Panc1 (cell line): ENCODE measurements at regions of chr2 and their contacts with region 1.

Region 1: DNA sequence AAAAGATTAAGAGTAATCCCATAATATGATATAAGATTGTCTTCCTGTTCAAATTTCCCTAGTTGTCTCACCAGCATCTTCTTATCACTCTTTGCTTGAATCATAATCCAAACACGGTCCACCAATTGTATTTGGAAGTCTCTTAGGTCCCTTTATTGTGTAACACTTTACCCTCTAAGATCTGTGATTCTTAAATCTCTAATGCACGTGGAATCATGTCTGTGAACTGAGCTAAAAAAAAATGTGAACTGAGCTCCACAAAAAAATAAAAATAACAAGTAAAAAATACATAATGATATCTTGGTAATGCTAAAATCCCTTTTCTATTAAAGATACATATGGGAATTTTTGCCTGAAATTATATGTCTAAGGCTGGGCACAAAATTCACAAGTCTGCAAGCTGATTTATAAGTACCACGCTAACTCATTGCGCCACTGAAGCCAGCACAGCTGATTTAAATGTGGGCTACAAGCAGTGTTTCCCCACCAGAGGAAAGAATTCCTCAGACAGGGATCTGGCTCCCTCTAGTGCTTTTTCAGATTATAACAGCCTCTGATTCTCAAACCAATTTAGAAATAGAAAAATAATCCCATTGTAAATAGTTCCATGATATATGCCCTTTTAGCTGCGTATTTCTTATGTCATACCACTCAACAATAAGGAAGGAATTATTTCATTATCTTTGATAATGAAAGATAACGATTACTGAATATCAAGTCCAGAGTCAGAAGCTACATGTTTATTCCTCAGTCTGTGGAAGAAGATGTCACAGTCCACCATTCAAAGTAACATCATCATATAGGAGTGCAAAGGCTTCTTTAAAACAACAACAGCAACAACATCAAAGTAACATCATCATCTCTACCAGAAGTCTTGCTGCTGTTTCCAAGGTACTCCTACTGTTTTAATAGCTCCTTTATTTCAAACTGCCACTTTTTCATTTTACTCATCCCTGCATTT is 22.9 kb downstream of the RBM43 start:
- DNase-seq: no peak
- ATAC-seq: peak; percentile 81
- H3K4me3 ChIP-seq: no peak overlapping the region
- H3K27ac ChIP-seq: peak overlapping the region; percentile 15; the same call in 1 of the 2 replicates
- H3K4me1 ChIP-seq: peaks cover 6% of the 10 kb centered on the region; the same call in 1 of the 2 replicates
- H3K27me3 ChIP-seq: no peaks in the 10 kb centered on the region
- CTCF ChIP-seq: peak; percentile 89

Region 2: DNA sequence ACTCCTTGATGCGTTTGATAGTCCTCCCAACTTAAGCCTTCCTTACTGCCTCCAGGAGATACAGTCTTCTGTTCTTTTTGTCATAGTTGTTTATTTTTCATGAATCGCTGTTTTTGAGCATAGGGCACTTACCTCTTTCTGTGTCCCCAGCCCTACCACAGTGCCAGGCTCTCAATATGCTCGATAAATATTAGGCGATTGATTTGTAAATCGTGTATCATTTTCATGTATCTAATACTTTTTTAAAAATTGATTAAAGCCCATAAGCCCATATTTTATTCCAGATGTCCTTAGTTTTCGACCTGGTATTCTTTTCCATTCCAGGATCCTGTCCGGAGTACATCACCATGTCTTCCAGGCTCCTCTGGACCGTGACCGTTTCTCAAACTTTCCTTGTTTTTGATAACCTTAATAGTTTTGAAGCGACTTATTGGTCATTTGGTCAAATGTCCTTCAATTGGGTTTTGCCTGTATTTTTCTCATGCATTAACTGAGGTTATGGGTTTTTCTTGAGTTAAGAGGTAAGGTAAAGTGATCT is 1650.8 kb before region 1 on chr2:
- CTCF ChIA-PET with region 1: no interaction called
- POLR2A ChIA-PET with region 1: no interaction called
- in situ Hi-C with region 1: no loop called
- intact Hi-C with region 1: loop called (anchors 2 kb)
- DNase-seq: no peak
- ATAC-seq: peak; percentile 57
- H3K4me3 ChIP-seq: peak overlapping the region; percentile 98 to 100
- H3K27ac ChIP-seq: peak overlapping the region; percentile 99
- H3K4me1 ChIP-seq: peaks cover 8% of the 10 kb centered on the region; the same call in 1 of the 2 replicates
- H3K27me3 ChIP-seq: no peaks in the 10 kb centered on the region
- CTCF ChIP-seq: no peak

Region 3: DNA sequence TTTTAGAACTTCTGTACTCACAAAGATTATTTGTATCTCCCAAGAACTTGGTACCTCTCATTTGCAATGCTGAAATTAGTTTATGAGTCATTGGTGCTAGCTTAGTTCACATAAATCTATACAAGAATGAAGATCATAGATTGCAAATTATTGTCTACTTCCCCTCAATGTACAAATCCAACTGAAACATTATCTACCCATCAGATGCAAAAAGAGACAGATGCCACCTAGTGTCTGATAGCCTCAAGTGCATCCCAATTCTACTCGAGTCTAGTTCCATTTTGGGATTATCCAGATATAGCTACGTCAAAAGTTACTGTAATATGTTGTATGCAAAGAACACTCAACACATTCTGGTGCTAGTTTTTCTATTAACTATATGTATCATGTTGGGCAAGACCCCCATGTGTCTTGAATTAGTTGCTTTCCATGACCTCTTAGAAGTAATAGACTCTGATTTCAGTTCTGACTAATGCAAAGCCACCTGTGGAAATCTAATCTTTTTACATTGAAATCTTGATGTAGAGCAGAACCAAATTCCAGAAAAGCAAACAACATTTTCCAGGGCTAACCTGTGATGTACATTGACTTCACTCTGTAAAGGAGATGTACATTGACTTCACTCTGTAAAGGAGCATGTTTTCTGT is 187.1 kb before region 1 on chr2:
- CTCF ChIA-PET with region 1: no interaction called
- POLR2A ChIA-PET with region 1: no interaction called
- in situ Hi-C with region 1: no loop called
- intact Hi-C with region 1: loop called (anchors 10 kb)
- DNase-seq: peak; percentile 55
- ATAC-seq: 0 out of 2 replicates have a peak, but pooled peaks have one; percentile 65
- H3K4me3 ChIP-seq: no peak overlapping the region
- H3K27ac ChIP-seq: no peak overlapping the region
- H3K4me1 ChIP-seq: no peaks in the 10 kb centered on the region
- H3K27me3 ChIP-seq: no peaks in the 10 kb centered on the region
- CTCF ChIP-seq: peak; percentile 77; the same call in 1 of the 2 replicates

Region 4: GRCh38 chr2:151315381-151315903 is 76.6 kb after region 1 on chr2:
- CTCF ChIA-PET with region 1: no interaction called
- POLR2A ChIA-PET with region 1: no interaction called
- in situ Hi-C with region 1: no loop called
- intact Hi-C with region 1: no loop called
- DNase-seq: no peak
- ATAC-seq: no peak
- H3K4me3 ChIP-seq: no peak overlapping the region
- H3K27ac ChIP-seq: no peak overlapping the region
- H3K4me1 ChIP-seq: no peaks in the 10 kb centered on the region
- H3K27me3 ChIP-seq: no peaks in the 10 kb centered on the region
- CTCF ChIP-seq: no peak